ENCODE measurements at regions of chr9 and their contacts with region 1.

Region 1: GRCh38 chr9:132406554-132407122 is at the start of gene TTF1:
- DNase-seq: peak; percentile 85
- ATAC-seq: peak; percentile 80
- H3K4me3 Mint-ChIP-seq: peak within 1 kb of the TSS; percentile 94
- H3K27ac Mint-ChIP-seq: peak within 1 kb of the TSS; percentile 87
- H3K4me1 Mint-ChIP-seq: peaks cover 50% of the 10 kb centered on the region
- H3K27me3 Mint-ChIP-seq: peaks cover 1% of the 10 kb centered on the region
- CTCF ChIP-seq: no peak
- total RNA-seq, gene TTF1: 22.0 and 22.8 TPM in 2 replicates

Region 2: DNA sequence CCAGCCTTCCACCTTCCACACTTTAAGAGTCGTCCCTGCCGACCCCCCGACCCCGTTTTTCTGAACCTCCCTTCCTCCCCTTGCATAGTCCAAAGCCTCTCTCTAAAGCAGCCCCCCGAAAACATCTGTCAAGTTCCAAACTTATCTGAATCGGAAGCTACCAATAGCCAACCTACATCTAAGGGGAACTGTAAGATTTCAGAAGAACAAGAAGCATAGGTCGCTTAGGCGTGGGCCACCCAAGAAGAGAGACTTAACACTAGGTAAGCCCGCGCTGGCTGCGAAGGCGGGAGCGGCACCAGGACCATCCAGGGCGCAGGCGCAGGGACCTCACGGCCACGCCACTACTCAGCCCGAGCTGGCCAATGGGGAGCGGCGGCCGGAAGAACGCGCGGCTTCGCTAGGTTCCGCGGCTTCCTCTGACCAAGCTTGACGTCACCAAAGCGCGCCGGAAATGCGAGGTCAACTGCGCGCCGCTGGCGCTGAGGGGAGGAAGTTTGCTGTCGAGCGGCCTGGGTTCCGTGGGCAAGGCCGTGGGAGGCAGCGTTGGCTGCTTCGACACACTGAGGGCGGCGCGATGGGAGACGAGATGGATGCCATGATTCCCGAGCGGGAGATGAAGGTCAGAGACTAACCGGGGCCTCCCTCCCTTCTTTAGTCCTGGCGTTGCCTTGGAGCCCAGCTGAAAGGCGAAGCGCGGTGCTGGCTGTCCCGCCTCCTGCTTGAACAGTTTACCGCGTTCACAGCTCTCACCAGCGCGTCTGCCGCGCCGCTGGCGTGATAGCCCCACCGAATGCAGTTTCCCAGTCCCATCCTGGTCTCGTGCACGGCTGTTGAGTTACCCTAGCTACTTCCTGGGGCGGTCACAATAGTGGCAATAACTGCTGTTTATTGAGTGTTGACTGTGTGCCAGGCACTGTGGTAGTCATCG is 1281.2 kb before region 1 on chr9 and contains the start of gene NUP214:
- CTCF ChIA-PET with region 1: interaction called, 3 read pairs
- POLR2A ChIA-PET with region 1: no interaction called
- intact Hi-C with region 1: loop called (anchors 5 kb)
- DNase-seq: peak; percentile 100
- ATAC-seq: peak; percentile 99
- H3K4me3 Mint-ChIP-seq: peak within 1 kb of the TSS; percentile 98
- H3K27ac Mint-ChIP-seq: peak within 1 kb of the TSS; percentile 98
- H3K4me1 Mint-ChIP-seq: peaks cover 29% of the 10 kb centered on the region
- H3K27me3 Mint-ChIP-seq: no peaks in the 10 kb centered on the region
- CTCF ChIP-seq: no peak
- total RNA-seq, gene NUP214: 72.2 and 90.9 TPM in 2 replicates

Region 3: GRCh38 chr9:132354637-132355355 is 51.8 kb before region 1 on chr9 and contains the start of gene SETX:
- CTCF ChIA-PET with region 1: no interaction called
- POLR2A ChIA-PET with region 1: interaction called, 9 read pairs
- intact Hi-C with region 1: loop called (anchors 1 kb)
- DNase-seq: peak; percentile 93
- ATAC-seq: peak; percentile 87
- H3K4me3 Mint-ChIP-seq: peak within 1 kb of the TSS; percentile 94
- H3K27ac Mint-ChIP-seq: peak within 1 kb of the TSS; percentile 97
- H3K4me1 Mint-ChIP-seq: peaks cover 53% of the 10 kb centered on the region
- H3K27me3 Mint-ChIP-seq: no peaks in the 10 kb centered on the region
- CTCF ChIP-seq: no peak
- total RNA-seq, gene SETX: 91.3 and 109 TPM in 2 replicates

Region 4: DNA sequence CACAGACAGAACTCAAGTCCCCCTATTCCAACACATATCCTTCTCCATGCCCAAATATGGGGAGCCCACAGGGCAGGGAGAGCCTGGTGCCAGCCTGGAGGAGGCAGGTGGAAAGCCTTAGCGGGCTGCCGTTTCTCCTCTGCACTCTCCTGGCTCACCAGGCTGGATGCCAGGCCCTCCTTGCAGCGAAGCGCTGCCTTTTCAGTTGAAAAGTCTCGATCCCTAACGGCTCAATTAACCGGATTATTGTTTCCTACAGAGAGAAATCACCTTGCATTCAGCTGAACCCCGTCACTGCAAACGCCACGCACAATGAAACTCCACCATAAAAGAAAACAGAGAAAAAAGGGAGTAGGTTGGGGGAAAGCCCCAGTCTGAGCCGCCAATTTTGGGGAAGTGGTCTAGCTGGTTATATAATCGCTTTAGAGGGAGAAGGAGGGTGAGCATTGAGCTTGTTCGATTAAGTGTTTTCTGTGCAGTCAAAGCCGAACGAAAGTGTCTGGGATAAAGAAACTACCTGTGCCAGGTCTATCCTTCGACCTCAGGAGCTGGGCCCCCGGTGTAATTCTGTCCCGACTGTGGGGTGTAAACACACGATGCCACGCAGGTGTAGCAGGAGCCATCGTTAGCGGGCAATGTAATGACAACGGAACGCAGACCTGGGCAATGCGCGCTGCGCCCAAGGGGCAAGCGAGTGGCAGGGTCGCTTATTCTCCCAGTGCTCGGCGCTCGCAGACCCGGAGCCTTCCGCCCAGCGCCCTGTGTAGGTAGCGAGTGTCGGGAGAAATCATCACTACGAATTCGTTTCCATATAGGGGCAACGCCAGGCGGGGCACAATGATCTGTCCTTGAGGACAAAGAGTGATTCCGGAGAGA is 179.6 kb after region 1 on chr9:
- CTCF ChIA-PET with region 1: no interaction called
- POLR2A ChIA-PET with region 1: no interaction called
- intact Hi-C with region 1: loop called (anchors 2 kb)
- DNase-seq: no peak
- ATAC-seq: peak; percentile 42
- H3K4me3 Mint-ChIP-seq: peak overlapping the region; percentile 2
- H3K27ac Mint-ChIP-seq: peak overlapping the region; percentile 27
- H3K4me1 Mint-ChIP-seq: peaks cover 22% of the 10 kb centered on the region
- H3K27me3 Mint-ChIP-seq: peaks cover 40% of the 10 kb centered on the region
- CTCF ChIP-seq: no peak

Region 5: DNA sequence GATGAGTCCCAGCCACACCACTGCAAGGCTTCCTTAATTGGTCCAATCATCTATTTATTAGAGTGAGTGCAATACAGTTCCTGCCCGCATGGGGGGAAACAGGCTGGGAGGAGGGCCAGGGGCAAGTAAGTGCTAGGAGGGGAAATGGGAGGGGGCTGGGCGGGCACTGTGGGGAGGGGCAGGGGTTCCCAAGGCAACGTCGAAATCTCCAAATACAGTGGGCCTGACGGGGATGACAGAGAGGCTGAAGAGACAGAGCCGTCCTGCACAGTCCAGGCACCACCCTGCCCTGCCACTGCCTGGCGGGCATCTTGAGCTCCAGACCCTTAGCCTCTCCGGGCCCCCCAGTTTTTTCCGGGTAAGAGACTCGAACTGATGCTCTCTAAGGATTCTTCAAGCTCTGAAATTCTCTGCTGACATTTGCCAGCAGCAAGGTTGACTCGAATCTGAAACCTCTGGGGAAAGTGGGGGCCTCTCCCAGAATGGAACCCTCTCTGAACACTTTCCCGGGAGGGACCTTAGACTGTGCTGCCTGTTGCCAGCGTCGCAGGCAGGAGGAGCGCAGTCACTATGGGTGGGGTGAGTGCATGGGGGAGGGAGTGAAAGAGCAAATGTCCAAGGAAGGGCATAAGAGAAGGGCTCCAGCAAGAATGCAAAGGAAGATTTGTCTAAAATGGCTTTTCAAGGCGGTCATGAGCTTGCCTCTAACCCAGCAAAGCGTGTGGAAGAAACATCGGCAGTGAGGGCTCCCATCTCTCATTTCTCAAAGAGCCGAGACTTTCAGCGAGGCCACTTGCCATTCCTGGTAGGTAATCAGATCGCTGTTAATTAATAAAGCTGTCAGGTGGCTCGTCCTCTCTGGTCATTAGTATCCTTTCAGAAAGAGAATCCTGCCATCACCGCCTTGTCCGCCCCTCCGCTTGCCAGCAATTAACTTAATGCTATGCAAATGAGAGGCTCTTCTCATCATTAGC is 362.6 kb after region 1 on chr9:
- CTCF ChIA-PET with region 1: no interaction called
- POLR2A ChIA-PET with region 1: interaction called, 11 read pairs
- intact Hi-C with region 1: no loop called
- DNase-seq: peak; percentile 50
- ATAC-seq: peak; percentile 76
- H3K4me3 Mint-ChIP-seq: peak overlapping the region; percentile 100
- H3K27ac Mint-ChIP-seq: peak overlapping the region; percentile 98
- H3K4me1 Mint-ChIP-seq: peaks cover 22% of the 10 kb centered on the region
- H3K27me3 Mint-ChIP-seq: no peaks in the 10 kb centered on the region
- CTCF ChIP-seq: no peak

Region 6: DNA sequence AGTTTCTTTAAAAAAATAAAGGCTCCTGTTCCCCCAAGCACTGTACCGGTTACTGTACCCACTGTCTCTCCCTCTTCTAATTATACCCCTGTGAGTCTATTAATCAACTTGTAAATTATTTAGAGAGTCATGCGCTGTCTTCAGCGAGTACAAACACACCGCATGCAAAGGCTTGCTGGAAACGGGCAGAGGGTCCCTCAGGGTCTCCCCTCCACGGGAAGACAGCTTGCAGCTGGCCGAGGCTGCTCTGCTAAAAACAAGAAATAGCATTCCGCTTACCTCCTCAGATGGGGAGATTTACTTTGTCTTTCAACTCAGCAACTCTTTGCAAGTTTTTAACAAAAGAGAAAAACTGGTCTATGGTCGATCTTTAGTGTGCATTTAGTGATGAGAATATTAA is 399.7 kb after region 1 on chr9:
- CTCF ChIA-PET with region 1: no interaction called
- POLR2A ChIA-PET with region 1: no interaction called
- intact Hi-C with region 1: no loop called
- DNase-seq: no peak
- ATAC-seq: no peak
- H3K4me3 Mint-ChIP-seq: no peak overlapping the region
- H3K27ac Mint-ChIP-seq: no peak overlapping the region
- H3K4me1 Mint-ChIP-seq: peaks cover 28% of the 10 kb centered on the region
- H3K27me3 Mint-ChIP-seq: peaks cover 17% of the 10 kb centered on the region
- CTCF ChIP-seq: no peak

Region 7: GRCh38 chr9:132901856-132902831 is 495.5 kb after region 1 on chr9:
- CTCF ChIA-PET with region 1: no interaction called
- POLR2A ChIA-PET with region 1: no interaction called
- intact Hi-C with region 1: loop called (anchors 5 kb)
- DNase-seq: peak; percentile 57
- ATAC-seq: peak; percentile 98
- H3K4me3 Mint-ChIP-seq: no peak overlapping the region
- H3K27ac Mint-ChIP-seq: no peak overlapping the region
- H3K4me1 Mint-ChIP-seq: peaks cover 5% of the 10 kb centered on the region
- H3K27me3 Mint-ChIP-seq: no peaks in the 10 kb centered on the region
- CTCF ChIP-seq: peak; percentile 54

Measured in activated B cell treated with CpG ODN at 0.5 μM for 24 hours (primary cell).